Activated T-helper 2 cell treated with anti-CD3 and anti-CD28 coated beads, Interferon-gamma antibody, Interleukin-2, Interleukin-4, amounts not matched to agents 10 μg/mL and 5 μg/mL and 100 μg/mL, durations not matched to agents 14 hours and 24 hours and 36 hours (primary cell): ENCODE measurements at regions of chr12 and their contacts with region 1.

Region 1: GRCh38 chr12:75933101-75933500 is 98.5 kb downstream of the PHLDA1 start:
- DNase-seq: no peak
- H3K4me3 Mint-ChIP-seq: no peak overlapping the region
- H3K27ac Mint-ChIP-seq: peak overlapping the region; percentile 73
- H3K4me1 Mint-ChIP-seq: peaks cover 44% of the 10 kb centered on the region
- H3K27me3 Mint-ChIP-seq: no peaks in the 10 kb centered on the region

Region 2: DNA sequence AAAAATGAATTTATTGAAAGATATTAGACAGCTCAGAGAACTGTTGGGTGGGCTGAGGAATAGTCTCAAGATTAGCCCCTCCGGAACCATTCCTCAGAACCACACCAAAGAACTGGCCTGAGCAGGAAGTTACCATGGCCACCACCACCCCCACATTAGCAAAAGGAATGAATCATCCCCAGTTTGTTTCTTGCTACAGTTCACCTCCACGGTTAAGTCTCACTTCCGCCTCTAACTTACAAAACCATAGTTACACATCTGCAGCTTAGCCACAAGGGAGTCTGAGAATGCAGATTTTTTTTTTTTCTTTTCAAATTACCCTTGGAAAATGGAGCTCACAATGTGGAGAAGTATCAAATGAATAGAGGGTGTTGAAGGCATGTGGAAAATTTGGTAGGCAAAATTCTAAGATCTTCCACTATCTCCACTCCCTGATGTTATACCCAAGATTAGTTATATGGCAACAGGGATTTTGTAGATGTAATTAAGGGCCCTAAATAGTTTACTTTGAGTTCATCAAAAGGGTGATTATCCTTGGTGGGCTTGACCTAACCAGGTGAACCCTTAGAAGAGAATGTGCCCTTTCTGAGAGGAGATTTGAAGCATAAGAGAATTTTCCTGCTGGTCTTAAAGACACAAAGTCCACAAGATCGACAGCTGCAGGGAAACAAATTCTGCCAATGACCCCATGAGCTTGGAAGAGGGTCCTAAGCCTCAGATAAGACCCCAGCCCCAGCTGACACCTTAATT is 291.9 kb before region 1 on chr12:
- intact Hi-C with region 1: loop called (anchors 1 kb)
- DNase-seq: peak; percentile 27
- H3K4me3 Mint-ChIP-seq: no peak overlapping the region
- H3K27ac Mint-ChIP-seq: peak overlapping the region; percentile 76
- H3K4me1 Mint-ChIP-seq: peaks cover 46% of the 10 kb centered on the region
- H3K27me3 Mint-ChIP-seq: peaks cover 12% of the 10 kb centered on the region

Region 3: DNA sequence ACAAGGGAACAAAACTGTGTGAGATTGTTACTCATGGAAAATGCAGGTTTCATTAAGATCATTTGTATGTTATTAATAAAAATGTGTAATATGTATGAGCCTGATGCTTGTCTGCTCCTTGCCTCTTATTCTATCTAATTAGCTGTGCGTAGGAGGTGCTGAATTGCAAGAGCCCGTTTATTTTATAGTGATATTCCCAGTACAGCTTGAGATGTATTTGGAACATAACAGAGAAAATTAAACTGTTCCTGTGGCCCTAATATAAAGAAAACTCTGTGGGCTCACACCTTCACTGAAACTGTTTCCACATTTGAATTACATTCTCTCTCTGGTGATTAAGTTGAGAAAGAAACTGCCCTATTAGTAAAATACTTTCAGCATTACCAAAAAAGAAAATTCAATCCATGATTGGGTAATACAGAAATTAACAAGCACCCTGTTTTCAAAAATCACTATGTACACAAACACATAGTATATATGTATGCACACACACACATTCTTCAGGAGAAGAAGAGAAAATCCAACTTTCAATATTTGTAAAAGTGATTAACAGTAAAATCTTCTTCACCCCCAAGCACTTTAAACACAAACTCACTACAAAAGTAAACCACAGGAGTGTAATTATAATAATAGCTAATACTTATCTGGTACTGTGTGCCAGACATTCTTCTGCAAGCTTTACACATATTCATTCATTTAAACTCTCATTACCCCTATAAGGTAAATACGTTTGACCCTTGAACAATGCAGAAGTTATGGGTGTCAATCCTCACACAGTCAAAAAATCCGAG is 134.8 kb before region 1 on chr12:
- intact Hi-C with region 1: no loop called
- DNase-seq: no peak
- H3K4me3 Mint-ChIP-seq: no peak overlapping the region
- H3K27ac Mint-ChIP-seq: no peak overlapping the region
- H3K4me1 Mint-ChIP-seq: no peaks in the 10 kb centered on the region
- H3K27me3 Mint-ChIP-seq: peaks cover 20% of the 10 kb centered on the region

Region 4: DNA sequence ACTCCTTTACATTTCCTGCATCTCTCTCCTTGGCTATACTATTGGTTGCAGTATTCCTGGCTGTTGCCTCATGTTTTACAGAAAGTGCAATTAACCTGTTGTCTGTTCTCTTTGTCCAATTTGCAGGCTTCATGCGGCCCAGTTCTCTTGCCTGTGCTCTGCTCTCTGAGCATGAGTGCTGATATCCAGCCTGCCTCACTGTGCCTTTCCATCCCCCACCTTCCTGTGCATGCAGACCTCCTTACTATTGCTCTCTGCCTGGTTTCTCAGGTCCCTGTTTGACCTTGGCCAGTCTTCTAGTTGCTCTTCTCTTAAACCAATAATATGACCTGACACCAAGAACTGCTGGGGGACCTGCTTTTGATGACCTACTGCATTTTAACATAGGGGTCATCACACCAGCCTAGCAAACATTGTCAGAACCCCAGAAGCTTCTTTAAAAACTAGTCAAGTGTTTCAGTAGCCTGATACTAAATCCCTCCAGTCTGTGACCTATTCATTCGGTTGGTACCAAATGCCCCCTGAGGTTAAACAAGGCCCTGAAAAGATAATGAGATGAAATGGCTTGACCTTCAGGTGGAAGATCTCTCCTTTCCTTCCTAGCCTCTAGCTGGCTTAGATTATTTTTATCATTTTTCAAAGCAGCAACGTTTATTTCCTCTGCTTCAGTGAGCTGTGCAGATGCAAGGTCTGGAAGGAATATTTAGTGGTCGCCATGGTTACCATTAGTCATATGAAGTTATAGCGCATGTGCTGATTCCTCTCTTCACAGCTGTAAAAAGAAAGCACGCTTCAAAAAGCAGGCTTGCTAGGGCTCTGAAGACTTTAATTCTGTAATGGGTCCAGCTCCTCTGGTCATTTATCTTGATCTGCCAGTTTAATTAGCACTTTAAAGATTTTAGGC is 118.0 kb before region 1 on chr12:
- intact Hi-C with region 1: loop called (anchors 5 kb)
- DNase-seq: no peak
- H3K4me3 Mint-ChIP-seq: no peak overlapping the region
- H3K27ac Mint-ChIP-seq: no peak overlapping the region
- H3K4me1 Mint-ChIP-seq: peaks cover 8% of the 10 kb centered on the region
- H3K27me3 Mint-ChIP-seq: peaks cover 9% of the 10 kb centered on the region

Region 5: DNA sequence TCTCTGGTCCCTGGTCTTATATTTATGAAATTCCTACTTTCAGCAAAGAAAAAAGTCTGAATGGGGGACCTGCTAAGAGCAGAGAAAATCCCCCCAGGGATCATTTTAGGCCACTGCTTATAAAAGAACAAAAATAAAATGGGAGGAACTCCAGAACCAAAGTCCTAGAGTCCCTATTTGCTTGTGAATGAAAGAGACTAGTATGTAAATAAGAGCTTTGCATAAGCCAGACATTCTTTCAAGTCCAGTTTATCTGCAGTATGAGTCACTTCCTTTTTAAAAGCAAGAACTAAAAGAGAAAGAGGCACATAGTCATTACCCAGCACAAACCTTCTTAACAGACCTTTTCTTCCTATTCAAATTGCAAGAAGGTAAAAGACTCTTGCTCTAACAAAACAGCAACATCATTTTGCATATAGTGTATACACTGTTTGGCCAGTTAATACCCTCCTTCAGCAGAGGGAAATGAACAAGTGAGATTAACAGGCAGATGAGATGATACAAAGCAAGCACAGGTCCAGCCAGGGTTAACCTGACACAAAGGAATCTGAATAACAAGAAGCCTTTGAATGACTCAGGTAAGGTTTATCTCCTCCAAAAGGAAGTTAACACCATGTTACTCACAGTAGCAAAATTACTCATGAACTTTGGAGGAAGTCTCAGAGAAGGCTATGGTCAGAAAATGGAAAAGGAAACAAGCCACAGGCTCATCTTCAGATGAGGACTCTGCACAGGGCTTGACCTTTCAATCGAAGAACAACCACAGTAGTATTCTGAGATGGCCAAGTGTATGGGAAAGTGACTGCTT is 11.2 kb after region 1 on chr12:
- intact Hi-C with region 1: loop called (anchors 1 kb)
- DNase-seq: no peak
- H3K4me3 Mint-ChIP-seq: peak overlapping the region; percentile 52
- H3K27ac Mint-ChIP-seq: peak overlapping the region; percentile 97
- H3K4me1 Mint-ChIP-seq: peaks cover 32% of the 10 kb centered on the region
- H3K27me3 Mint-ChIP-seq: no peaks in the 10 kb centered on the region

Region 6: DNA sequence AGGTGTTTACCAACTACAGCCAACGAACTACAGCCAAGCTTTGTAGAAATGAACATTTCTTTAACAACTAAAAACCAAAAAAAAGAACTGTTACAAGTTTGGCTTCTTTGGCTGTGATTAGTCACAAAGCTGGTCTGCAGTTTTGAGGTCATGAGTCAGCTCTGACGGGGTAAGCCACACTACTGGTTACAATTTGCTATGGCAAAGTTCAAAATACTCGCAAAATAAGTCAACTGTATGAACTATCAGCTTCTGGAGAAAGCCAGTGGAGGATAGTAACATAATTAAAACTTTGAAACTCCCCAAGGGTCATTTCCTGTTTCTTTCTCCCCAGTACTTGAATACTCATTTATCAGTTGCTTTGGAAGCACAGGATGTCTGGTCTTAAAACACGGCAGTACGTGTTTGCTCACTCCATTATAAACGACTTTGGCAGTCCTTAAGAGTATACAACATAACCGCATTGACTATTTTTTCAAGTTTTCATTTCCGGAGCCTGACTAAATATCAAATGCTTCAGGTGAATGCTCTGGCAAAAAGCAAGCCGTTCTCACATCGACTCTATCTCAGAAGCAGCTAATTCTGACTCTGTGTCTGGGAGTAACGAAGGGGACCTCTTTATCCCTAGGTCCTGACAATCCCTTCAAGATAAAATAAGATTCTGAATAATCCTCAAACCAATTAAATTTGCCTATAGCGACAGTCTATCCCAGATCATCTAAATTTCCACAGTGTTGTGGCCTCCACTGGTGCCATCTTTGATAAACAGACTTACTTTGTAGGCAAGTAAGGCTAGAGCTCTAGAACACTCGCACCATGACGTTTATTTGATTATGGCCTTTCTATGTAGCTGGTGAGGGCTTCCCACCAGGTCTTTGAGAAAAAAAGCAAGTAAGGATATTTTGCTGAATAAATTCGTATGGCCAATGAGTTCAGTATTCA is 87.9 kb after region 1 on chr12:
- intact Hi-C with region 1: loop called (anchors 1 kb)
- DNase-seq: peak; percentile 67
- H3K4me3 Mint-ChIP-seq: peak overlapping the region; percentile 66
- H3K27ac Mint-ChIP-seq: peak overlapping the region; percentile 99
- H3K4me1 Mint-ChIP-seq: peaks cover 60% of the 10 kb centered on the region
- H3K27me3 Mint-ChIP-seq: no peaks in the 10 kb centered on the region

Region 7: GRCh38 chr12:76037130-76038103 is 104.3 kb after region 1 on chr12:
- intact Hi-C with region 1: no loop called
- DNase-seq: no peak
- H3K4me3 Mint-ChIP-seq: no peak overlapping the region
- H3K27ac Mint-ChIP-seq: no peak overlapping the region
- H3K4me1 Mint-ChIP-seq: peaks cover 30% of the 10 kb centered on the region
- H3K27me3 Mint-ChIP-seq: no peaks in the 10 kb centered on the region